GM18951 (cell line): ENCODE measurements at regions of chr12 and their contacts with region 1.

Region 1: GRCh38 chr12:110698171-110698902 is 9.4 kb upstream of the HVCN1 start:
- POLR2A ChIP-seq: no peak

Region 2: GRCh38 chr12:110613771-110614684 is 84.3 kb before region 1 on chr12 and contains the start of gene TCTN1:
- in situ Hi-C with region 1: loop called (anchors 10 kb)
- POLR2A ChIP-seq: peak; percentile 89